Mammary epithelial cell (primary cell): ENCODE measurements at regions of chr2 and their contacts with region 1.

Region 1: GRCh38 chr2:16756831-16757644 is 91.4 kb upstream of the CYRIA start:
- DNase-seq: peak; percentile 34
- H3K4me3 ChIP-seq: no peak overlapping the region
- H3K27ac ChIP-seq: no peak overlapping the region
- H3K4me1 ChIP-seq: no peaks in the 10 kb centered on the region
- H3K27me3 ChIP-seq: no peaks in the 10 kb centered on the region
- CTCF ChIP-seq: peak; percentile 73 to 85

Region 2: GRCh38 chr2:16525265-16525887 is 231.7 kb before region 1 on chr2:
- CTCF ChIA-PET with region 1: no interaction called
- dilution Hi-C with region 1: no loop called
- in situ Hi-C with region 1: no loop called
- intact Hi-C with region 1: loop called (anchors 5 kb)
- DNase-seq: peak; percentile 10
- H3K4me3 ChIP-seq: no peak overlapping the region
- H3K27ac ChIP-seq: no peak overlapping the region
- H3K4me1 ChIP-seq: no peaks in the 10 kb centered on the region
- H3K27me3 ChIP-seq: peaks cover 2% of the 10 kb centered on the region
- CTCF ChIP-seq: peak; percentile 52 to 63

Region 3: GRCh38 chr2:16553226-16553625 is 203.8 kb before region 1 on chr2:
- CTCF ChIA-PET with region 1: no interaction called
- dilution Hi-C with region 1: no loop called
- in situ Hi-C with region 1: no loop called
- intact Hi-C with region 1: loop called (anchors 2 kb)
- DNase-seq: peak; percentile 28
- H3K4me3 ChIP-seq: no peak overlapping the region
- H3K27ac ChIP-seq: no peak overlapping the region
- H3K4me1 ChIP-seq: no peaks in the 10 kb centered on the region
- H3K27me3 ChIP-seq: no peaks in the 10 kb centered on the region
- CTCF ChIP-seq: peak; percentile 51 to 68

Region 4: DNA sequence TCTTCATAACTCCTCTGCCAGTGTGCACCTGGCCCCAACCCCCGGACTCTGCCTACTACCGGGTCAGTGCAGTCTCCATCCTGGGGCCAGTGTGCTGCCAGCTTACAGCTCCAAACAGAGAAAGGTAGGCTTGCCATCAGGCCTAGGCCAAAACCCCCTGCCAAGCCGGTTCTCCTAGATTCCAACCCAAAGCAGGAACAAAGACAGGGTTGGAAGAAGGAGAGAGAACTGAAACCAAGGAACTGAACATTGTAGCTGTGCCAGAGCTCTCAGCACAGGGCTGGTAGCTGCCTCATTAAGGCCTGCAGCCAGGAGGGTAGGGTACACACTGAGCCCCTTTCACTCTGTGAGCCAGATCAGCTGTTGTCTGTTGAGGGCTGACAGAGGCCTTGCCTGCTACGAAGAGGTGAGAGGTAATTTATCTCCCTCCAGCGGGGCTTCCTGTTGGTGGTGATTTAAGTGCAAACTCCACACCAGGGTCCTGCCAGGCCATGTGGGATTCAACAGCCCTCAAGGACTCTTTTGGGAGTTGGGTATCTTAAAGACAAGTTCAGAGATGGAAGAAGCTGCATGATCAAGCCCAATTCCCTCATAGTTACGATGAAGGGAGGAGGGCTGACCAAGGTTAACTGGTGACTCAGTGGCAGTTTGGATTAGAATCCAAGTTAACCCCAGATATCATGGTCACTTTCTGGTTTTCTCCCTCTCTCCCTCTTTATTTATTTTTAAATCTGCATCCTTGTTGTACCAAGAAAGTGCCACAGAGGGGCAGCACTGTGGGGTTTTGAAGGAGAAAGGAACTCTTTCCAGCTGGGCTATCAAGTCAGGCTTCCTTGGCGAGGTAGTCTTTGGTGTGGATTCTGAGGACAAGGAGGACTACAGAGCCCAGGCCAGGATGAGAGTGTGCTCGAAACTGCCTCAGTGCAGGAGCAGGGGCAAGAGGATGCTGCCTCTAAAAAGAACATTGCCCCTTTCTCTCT is 139.5 kb before region 1 on chr2:
- CTCF ChIA-PET with region 1: interaction called, 7 read pairs
- dilution Hi-C with region 1: no loop called
- in situ Hi-C with region 1: loop called (anchors 5 kb)
- intact Hi-C with region 1: loop called (anchors 1 kb)
- DNase-seq: no peak
- H3K4me3 ChIP-seq: no peak overlapping the region
- H3K27ac ChIP-seq: no peak overlapping the region
- H3K4me1 ChIP-seq: peaks cover 6% of the 10 kb centered on the region
- H3K27me3 ChIP-seq: no peaks in the 10 kb centered on the region
- CTCF ChIP-seq: peak; percentile 36 to 66

Region 5: GRCh38 chr2:16798472-16798871 is 41.4 kb after region 1 on chr2:
- CTCF ChIA-PET with region 1: no interaction called
- dilution Hi-C with region 1: no loop called
- in situ Hi-C with region 1: no loop called
- intact Hi-C with region 1: no loop called
- DNase-seq: no peak
- H3K4me3 ChIP-seq: no peak overlapping the region
- H3K27ac ChIP-seq: no peak overlapping the region
- H3K4me1 ChIP-seq: no peaks in the 10 kb centered on the region
- H3K27me3 ChIP-seq: no peaks in the 10 kb centered on the region
- CTCF ChIP-seq: no peak